SK-N-SH (cell line): ENCODE measurements at regions of chr3 and their contacts with region 1.

Region 1: GRCh38 chr3:157606011-157606851 is 103.0 kb upstream of the VEPH1 start:
- DNase-seq: peak; percentile 64
- H3K4me3 ChIP-seq: peak overlapping the region in 1 of 2 experiments; percentile 18; a peak in 1 of 4 replicates
- H3K27ac ChIP-seq: no peak overlapping the region
- H3K4me1 ChIP-seq: peaks cover 0 to 4% of the 10 kb centered on the region in 2 experiments; a peak in 1 of 4 replicates
- H3K27me3 ChIP-seq: no peaks in the 10 kb centered on the region
- CTCF ChIP-seq: peak; percentile 86
- EP300 ChIP-seq: no peak
- RAD21 ChIP-seq: peak; percentile 65

Region 2: GRCh38 chr3:157585386-157585785 is 20.8 kb before region 1 on chr3:
- CTCF ChIA-PET with region 1: interaction called, 11 read pairs
- POLR2A ChIA-PET with region 1: no interaction called
- DNase-seq: no peak
- H3K4me3 ChIP-seq: no peak overlapping the region
- H3K27ac ChIP-seq: no peak overlapping the region
- H3K4me1 ChIP-seq: peaks cover 0 to 4% of the 10 kb centered on the region in 2 experiments; a peak in 2 of 4 replicates
- H3K27me3 ChIP-seq: no peaks in the 10 kb centered on the region
- CTCF ChIP-seq: no peak
- EP300 ChIP-seq: no peak
- RAD21 ChIP-seq: no peak

Region 3: GRCh38 chr3:157594413-157594812 is 11.8 kb before region 1 on chr3:
- CTCF ChIA-PET with region 1: interaction called, 21 read pairs
- POLR2A ChIA-PET with region 1: no interaction called
- DNase-seq: no peak
- H3K4me3 ChIP-seq: no peak overlapping the region
- H3K27ac ChIP-seq: no peak overlapping the region
- H3K4me1 ChIP-seq: peaks cover 0 to 4% of the 10 kb centered on the region in 2 experiments; a peak in 1 of 4 replicates
- H3K27me3 ChIP-seq: no peaks in the 10 kb centered on the region
- CTCF ChIP-seq: no peak
- EP300 ChIP-seq: no peak
- RAD21 ChIP-seq: no peak

Region 4: GRCh38 chr3:157618075-157618760 is 12.0 kb after region 1 on chr3:
- CTCF ChIA-PET with region 1: interaction called, 29 read pairs
- POLR2A ChIA-PET with region 1: no interaction called
- DNase-seq: peak; percentile 41
- H3K4me3 ChIP-seq: no peak overlapping the region; a peak in 1 of 4 replicates
- H3K27ac ChIP-seq: peak overlapping the region in 1 of 2 experiments; percentile 6; a peak in 1 of 4 replicates
- H3K4me1 ChIP-seq: peaks cover 0 to 4% of the 10 kb centered on the region in 2 experiments; a peak in 2 of 4 replicates
- H3K27me3 ChIP-seq: no peaks in the 10 kb centered on the region
- CTCF ChIP-seq: peak; percentile 73
- EP300 ChIP-seq: no peak
- RAD21 ChIP-seq: peak; percentile 92

Region 5: GRCh38 chr3:158532099-158532734 is 926.0 kb after region 1 on chr3:
- CTCF ChIA-PET with region 1: interaction called, 12 read pairs
- POLR2A ChIA-PET with region 1: no interaction called
- DNase-seq: peak; percentile 36
- H3K4me3 ChIP-seq: no peak overlapping the region; a peak in 1 of 4 replicates
- H3K27ac ChIP-seq: no peak overlapping the region
- H3K4me1 ChIP-seq: peaks cover 0 to 10% of the 10 kb centered on the region in 2 experiments; a peak in 2 of 4 replicates
- H3K27me3 ChIP-seq: no peaks in the 10 kb centered on the region
- CTCF ChIP-seq: peak; percentile 83
- EP300 ChIP-seq: no peak
- RAD21 ChIP-seq: peak; percentile 95